CD8-positive, alpha-beta T cell (primary cell): ENCODE measurements at regions of chr2 and their contacts with region 1.

Region 1: GRCh38 chr2:105744091-105744908 is 412 bp upstream of the NCK2 start:
- DNase-seq: peak; percentile 37 to 87 (median 70)
- ATAC-seq: peak; percentile 74
- H3K4me3 ChIP-seq: peak overlapping the region; percentile 31 to 49
- H3K4me3 Mint-ChIP-seq: peak overlapping the region; percentile 86
- H3K27ac ChIP-seq: peak overlapping the region; percentile 31 to 51
- H3K27ac Mint-ChIP-seq: peak overlapping the region; percentile 94
- H3K4me1 ChIP-seq: peaks cover 58% of the 10 kb centered on the region
- H3K4me1 Mint-ChIP-seq: peaks cover 78% of the 10 kb centered on the region
- H3K27me3 ChIP-seq: no peaks in the 10 kb centered on the region
- H3K27me3 Mint-ChIP-seq: no peaks in the 10 kb centered on the region
- CTCF ChIP-seq: no peak

Region 2: DNA sequence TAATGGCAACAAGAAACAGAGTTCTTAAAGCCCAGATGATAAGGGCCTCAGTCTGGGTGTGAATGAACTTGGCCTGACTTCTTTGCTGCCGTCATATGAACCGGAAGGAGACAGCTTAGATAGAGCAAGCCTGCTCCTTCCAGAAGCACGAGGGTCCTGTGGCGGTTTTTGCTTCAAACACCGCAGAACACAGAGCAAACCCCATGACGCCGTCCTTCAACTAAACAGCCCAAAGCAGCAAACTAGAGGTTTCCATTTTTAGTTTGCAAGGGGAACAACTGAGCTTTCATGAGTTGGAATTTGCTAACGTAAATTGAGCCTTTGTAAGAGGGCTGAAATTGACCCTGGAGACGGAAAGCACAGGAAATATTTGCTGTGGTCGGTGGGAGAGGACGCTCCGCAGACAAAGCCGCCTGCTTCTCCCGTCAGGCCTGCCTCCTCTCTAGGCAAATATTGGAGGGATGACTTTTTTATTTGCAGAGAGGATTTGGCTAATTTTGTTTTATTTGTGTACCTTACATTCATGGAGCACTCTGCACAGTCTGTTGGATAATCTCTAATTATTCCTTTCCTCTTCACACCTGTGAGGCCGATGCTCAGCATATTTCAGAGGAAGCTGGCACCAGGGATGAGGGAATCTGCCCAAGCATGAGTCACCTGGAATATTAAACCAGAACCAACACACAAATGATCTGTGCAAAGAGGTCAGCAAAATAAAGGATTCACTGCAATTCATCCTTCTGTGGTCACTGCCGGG is 133.5 kb before region 1 on chr2:
- CTCF ChIA-PET with region 1: no interaction called
- POLR2A ChIA-PET with region 1: no interaction called
- intact Hi-C with region 1: no loop called
- DNase-seq: no peak
- ATAC-seq: no peak
- H3K4me3 ChIP-seq: no peak overlapping the region
- H3K4me3 Mint-ChIP-seq: no peak overlapping the region
- H3K27ac ChIP-seq: no peak overlapping the region
- H3K27ac Mint-ChIP-seq: no peak overlapping the region
- H3K4me1 ChIP-seq: no peaks in the 10 kb centered on the region
- H3K4me1 Mint-ChIP-seq: peaks cover 3% of the 10 kb centered on the region
- H3K27me3 ChIP-seq: no peaks in the 10 kb centered on the region
- H3K27me3 Mint-ChIP-seq: no peaks in the 10 kb centered on the region
- CTCF ChIP-seq: no peak

Region 3: DNA sequence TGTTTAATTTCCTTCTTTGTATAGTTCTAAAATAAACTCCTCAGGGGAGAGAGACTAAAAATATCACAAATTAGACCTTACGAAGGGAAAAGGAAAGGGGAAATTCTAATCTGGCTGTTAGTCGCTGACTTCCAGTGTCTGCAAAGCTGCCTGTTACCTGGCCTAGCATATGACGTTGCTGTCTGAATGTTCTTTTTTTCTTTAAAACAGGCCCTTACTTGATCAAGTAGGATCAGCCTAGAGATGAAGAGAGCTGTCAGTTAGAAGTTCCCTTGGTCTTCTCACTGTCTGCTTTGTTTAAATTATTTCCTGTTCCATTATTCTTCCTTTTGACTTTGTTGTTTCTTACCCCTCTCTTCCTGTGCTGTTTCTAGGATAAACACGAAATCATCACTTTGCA is 11.6 kb after region 1 on chr2:
- CTCF ChIA-PET with region 1: interaction called, 3 read pairs
- POLR2A ChIA-PET with region 1: interaction called, 18 read pairs
- intact Hi-C with region 1: loop called in 1 of 2 experiments (anchors 1 kb)
- DNase-seq: peak in 3 of 9 experiments; percentile 54 to 85 (median 76)
- ATAC-seq: peak; percentile 75
- H3K4me3 ChIP-seq: peak overlapping the region; percentile 7 to 27
- H3K4me3 Mint-ChIP-seq: peak overlapping the region; percentile 50
- H3K27ac ChIP-seq: peak overlapping the region; percentile 70 to 79
- H3K27ac Mint-ChIP-seq: peak overlapping the region; percentile 92
- H3K4me1 ChIP-seq: peaks cover 95% of the 10 kb centered on the region
- H3K4me1 Mint-ChIP-seq: peaks cover 97% of the 10 kb centered on the region
- H3K27me3 ChIP-seq: no peaks in the 10 kb centered on the region
- H3K27me3 Mint-ChIP-seq: no peaks in the 10 kb centered on the region
- CTCF ChIP-seq: no peak

Region 4: GRCh38 chr2:105789745-105790460 is 45.6 kb after region 1 on chr2:
- CTCF ChIA-PET with region 1: interaction called, 5 read pairs
- POLR2A ChIA-PET with region 1: interaction called, 4 read pairs
- intact Hi-C with region 1: loop called in 1 of 2 experiments (anchors 5 kb)
- DNase-seq: peak in 5 of 9 experiments; percentile 56 to 84 (median 70)
- ATAC-seq: peak; percentile 83
- H3K4me3 ChIP-seq: no peak overlapping the region
- H3K4me3 Mint-ChIP-seq: peak overlapping the region; percentile 62
- H3K27ac ChIP-seq: peak overlapping the region; percentile 8 to 86
- H3K27ac Mint-ChIP-seq: peak overlapping the region; percentile 94
- H3K4me1 ChIP-seq: peaks cover 91% of the 10 kb centered on the region
- H3K4me1 Mint-ChIP-seq: peaks cover 93% of the 10 kb centered on the region
- H3K27me3 ChIP-seq: no peaks in the 10 kb centered on the region
- H3K27me3 Mint-ChIP-seq: no peaks in the 10 kb centered on the region
- CTCF ChIP-seq: peak; percentile 39

Region 5: DNA sequence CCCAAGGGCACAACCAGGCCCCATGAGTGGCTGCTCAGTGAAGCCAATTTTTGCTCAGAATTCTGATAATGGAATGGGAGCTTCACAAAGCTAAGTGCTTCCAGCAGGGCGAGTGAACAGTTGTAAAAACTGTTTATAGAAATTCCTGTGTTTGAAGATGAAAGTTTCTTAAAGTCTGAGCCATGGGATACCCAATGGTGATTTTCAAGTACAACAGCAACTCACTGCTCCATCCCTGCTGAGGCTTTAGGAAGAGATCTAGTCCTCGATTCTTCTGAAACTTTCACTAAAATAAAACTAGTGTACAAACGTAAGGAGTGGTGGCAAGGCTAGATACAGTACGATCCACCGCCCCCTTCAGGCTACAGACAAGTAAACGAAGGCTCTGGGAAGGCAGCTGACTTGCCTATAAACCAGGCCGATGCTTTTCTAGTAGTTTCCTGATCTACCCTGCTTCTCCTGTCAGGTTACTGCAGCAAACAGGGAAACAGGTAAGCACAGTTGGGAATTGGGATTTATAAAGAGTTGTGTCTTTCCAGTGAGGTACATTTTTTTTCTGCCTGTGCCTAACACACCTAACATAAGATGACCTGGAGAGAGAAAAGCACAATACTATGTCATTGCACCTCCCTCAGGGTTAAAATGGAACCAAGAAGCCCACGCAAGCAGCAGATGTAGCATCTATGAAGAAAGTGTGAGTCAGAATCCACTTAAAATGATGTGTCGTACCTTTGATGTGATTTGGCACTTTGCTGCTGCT is 341.1 kb after region 1 on chr2:
- CTCF ChIA-PET with region 1: interaction called, 21 read pairs
- POLR2A ChIA-PET with region 1: interaction called, 3 read pairs
- intact Hi-C with region 1: no loop called
- DNase-seq: peak in 7 of 9 experiments; percentile 44 to 81 (median 75)
- ATAC-seq: peak; percentile 94
- H3K4me3 ChIP-seq: peak overlapping the region in 1 of 2 experiments; percentile 5
- H3K4me3 Mint-ChIP-seq: peak overlapping the region; percentile 66
- H3K27ac ChIP-seq: peak overlapping the region; percentile 46 to 59
- H3K27ac Mint-ChIP-seq: peak overlapping the region; percentile 98
- H3K4me1 ChIP-seq: peaks cover 56% of the 10 kb centered on the region
- H3K4me1 Mint-ChIP-seq: peaks cover 72% of the 10 kb centered on the region
- H3K27me3 ChIP-seq: no peaks in the 10 kb centered on the region
- H3K27me3 Mint-ChIP-seq: no peaks in the 10 kb centered on the region
- CTCF ChIP-seq: peak; percentile 57

Region 6: DNA sequence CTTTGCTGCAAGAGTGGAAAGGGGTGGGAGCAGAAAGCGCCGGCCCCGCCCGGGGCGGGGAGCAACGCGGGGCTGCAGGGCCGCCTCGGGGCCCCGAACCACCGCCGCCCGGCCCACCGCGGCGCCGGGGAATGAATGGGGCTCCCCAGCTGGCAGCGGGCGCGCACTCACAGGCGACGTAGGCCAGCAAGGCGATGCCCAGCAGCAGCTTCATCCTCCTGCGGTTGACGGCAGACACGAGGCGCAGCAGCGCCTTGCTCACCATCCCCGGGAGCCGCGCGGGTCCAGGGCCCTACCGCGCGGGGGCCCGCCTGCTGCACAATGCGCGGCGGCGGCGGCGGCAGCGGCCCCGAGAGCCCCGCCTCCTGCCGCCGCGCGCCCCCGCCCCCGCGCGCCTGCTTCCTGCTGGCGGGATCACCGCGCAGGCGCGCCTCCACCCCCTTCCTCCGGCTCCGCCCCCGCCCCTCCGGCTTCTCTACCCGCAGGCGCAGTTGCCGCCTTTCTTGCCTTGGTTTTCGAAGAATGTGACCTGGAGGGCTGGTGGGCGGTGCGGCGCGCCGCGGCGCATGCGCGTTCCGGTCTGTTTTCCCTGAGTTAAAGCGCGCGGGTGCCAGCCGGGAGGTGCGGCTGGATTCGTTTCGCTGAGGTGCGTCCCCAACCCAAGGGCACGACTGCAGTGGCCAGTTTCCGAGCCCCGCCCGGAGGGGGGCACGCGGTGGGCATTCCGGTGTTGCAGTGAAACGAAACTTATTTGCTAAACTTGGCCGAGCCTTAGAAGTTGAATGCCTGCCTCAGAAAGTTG is 449.9 kb after region 1 on chr2 and contains the start of gene UXS1:
- CTCF ChIA-PET with region 1: no interaction called
- POLR2A ChIA-PET with region 1: interaction called, 3 read pairs
- intact Hi-C with region 1: loop called (anchors 5 kb)
- DNase-seq: peak; percentile 97 to 99 (median 98)
- ATAC-seq: peak; percentile 80
- H3K4me3 ChIP-seq: peak within 1 kb of the TSS; percentile 80 to 90
- H3K4me3 Mint-ChIP-seq: peak within 1 kb of the TSS; percentile 97
- H3K27ac ChIP-seq: peak within 1 kb of the TSS; percentile 70 to 77
- H3K27ac Mint-ChIP-seq: peak within 1 kb of the TSS; percentile 97
- H3K4me1 ChIP-seq: peaks cover 39% of the 10 kb centered on the region
- H3K4me1 Mint-ChIP-seq: peaks cover 46% of the 10 kb centered on the region
- H3K27me3 ChIP-seq: no peaks in the 10 kb centered on the region
- H3K27me3 Mint-ChIP-seq: no peaks in the 10 kb centered on the region
- CTCF ChIP-seq: no peak
- total RNA-seq, gene UXS1: 62.1 to 70.8 TPM